ENCODE measurements at regions of chr9 and their contacts with region 1.

Region 1: DNA sequence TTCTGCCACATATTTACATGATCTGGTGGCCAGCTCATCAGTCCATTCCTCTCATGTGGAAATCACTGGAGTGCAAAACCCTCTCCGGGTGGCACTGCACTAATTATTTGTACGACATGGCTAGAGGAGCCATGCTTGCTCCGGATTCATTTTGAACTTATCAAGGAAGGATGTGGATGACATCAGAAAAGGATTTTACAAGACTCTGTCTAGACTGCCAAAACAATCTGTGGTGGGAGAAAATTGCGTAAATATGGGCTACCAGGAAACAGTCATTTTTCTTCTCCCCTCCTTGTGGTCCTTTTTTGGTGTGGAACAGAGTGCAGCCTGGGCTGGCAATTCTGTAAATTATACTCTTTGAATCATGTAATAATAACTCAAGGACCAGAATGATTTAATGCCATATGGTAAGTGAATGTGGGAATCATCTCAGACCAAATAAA is 123.4 kb upstream of the IFNE start:
- DNase-seq: no peak
- ATAC-seq: no peak
- H3K4me3 ChIP-seq: no peak overlapping the region
- H3K4me3 Mint-ChIP-seq: no peak overlapping the region
- H3K27ac ChIP-seq: no peak overlapping the region
- H3K27ac Mint-ChIP-seq: no peak overlapping the region
- H3K4me1 ChIP-seq: peaks cover under 1% of the 10 kb centered on the region
- H3K4me1 Mint-ChIP-seq: peaks cover 19% of the 10 kb centered on the region
- H3K27me3 ChIP-seq: no peaks in the 10 kb centered on the region
- H3K27me3 Mint-ChIP-seq: peaks cover 2% of the 10 kb centered on the region
- CTCF ChIP-seq: no peak

Region 2: GRCh38 chr9:21638104-21638503 is 32.6 kb after region 1 on chr9:
- CTCF ChIA-PET with region 1: no interaction called
- POLR2A ChIA-PET with region 1: no interaction called
- intact Hi-C with region 1: loop called in 1 of 2 experiments (anchors 5 kb)
- DNase-seq: no peak
- ATAC-seq: no peak
- H3K4me3 ChIP-seq: no peak overlapping the region
- H3K4me3 Mint-ChIP-seq: no peak overlapping the region
- H3K27ac ChIP-seq: no peak overlapping the region
- H3K27ac Mint-ChIP-seq: no peak overlapping the region
- H3K4me1 ChIP-seq: no peaks in the 10 kb centered on the region
- H3K4me1 Mint-ChIP-seq: no peaks in the 10 kb centered on the region
- H3K27me3 ChIP-seq: no peaks in the 10 kb centered on the region
- H3K27me3 Mint-ChIP-seq: no peaks in the 10 kb centered on the region
- CTCF ChIP-seq: no peak

Measured in CD8-positive, alpha-beta T cell (primary cell).